ENCODE measurements at regions of chr3 and their contacts with region 1.

Region 1: DNA sequence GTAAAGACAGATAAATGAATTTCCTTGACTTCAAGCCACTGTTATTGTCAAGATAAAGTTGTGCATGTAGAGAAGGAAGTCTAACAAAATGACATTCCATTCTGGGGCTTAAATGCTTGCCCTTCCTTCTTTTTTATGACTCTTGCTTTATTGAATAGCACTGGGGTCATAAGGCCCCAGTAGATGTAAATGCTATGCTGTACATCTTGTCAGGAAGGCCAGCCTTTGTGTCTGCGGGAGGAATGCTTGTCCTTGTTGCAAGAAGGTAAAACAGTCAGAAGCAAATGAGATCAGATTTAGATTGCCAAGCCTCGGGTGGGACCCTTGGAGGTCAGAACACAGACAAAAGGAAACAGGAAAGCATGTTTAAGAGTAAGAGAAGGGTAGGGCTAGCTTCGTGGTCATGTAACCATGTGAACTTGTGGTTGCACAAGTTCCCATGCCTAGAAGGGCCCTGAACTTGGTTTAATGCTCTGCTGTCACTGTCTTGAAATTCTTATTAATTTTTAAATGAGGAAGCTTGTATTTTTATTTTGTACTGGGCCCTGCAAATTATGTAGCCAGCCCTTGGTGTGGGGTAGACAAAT is 81.5 kb downstream of the PPM1L start:
- DNase-seq: peak in 1 of 2 donors; percentile 15
- ATAC-seq: peak; percentile 76 to 86 (median 80)
- H3K4me3 ChIP-seq: no peak overlapping the region
- H3K4me3 Mint-ChIP-seq: peak overlapping the region; percentile 78
- H3K27ac ChIP-seq: peak overlapping the region; percentile 70
- H3K27ac Mint-ChIP-seq: peak overlapping the region; percentile 87 to 91
- H3K4me1 ChIP-seq: peaks cover 14% of the 10 kb centered on the region
- H3K4me1 Mint-ChIP-seq: peaks cover 75 to 93% of the 10 kb centered on the region in 2 donors
- H3K27me3 ChIP-seq: no peaks in the 10 kb centered on the region
- H3K27me3 Mint-ChIP-seq: no peaks in the 10 kb centered on the region
- CTCF ChIP-seq: no peak

Region 2: DNA sequence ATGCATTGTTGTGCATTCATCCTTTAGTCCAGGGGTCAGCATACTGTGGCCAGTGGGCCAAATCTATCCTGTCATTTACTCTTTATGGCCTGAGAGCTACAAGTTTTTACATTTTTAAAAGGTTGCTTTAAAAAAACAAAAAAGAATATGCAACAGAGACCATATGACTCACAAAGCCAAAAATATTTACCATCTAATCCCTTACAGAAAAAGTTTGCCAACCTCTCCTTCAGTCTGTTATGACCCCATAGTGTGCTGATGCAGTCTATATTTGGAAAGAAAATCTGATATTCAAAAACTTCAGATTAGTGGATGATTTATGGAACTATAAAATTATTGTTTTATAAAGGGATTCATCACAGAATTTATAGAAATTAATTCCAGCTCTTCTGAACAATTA is 1086.3 kb before region 1 on chr3:
- intact Hi-C with region 1: no loop called
- DNase-seq: no peak
- ATAC-seq: no peak
- H3K4me3 ChIP-seq: no peak overlapping the region
- H3K4me3 Mint-ChIP-seq: no peak overlapping the region
- H3K27ac ChIP-seq: no peak overlapping the region
- H3K27ac Mint-ChIP-seq: no peak overlapping the region
- H3K4me1 ChIP-seq: no peaks in the 10 kb centered on the region
- H3K4me1 Mint-ChIP-seq: no peaks in the 10 kb centered on the region
- H3K27me3 ChIP-seq: no peaks in the 10 kb centered on the region
- H3K27me3 Mint-ChIP-seq: peaks cover 0 to 4% of the 10 kb centered on the region in 2 donors
- CTCF ChIP-seq: no peak

Region 3: GRCh38 chr3:160754855-160755747 is 82.4 kb before region 1 on chr3:
- intact Hi-C with region 1: loop called (anchors 5 kb)
- DNase-seq: peak; percentile 81 to 94
- ATAC-seq: peak; percentile 83 to 93 (median 84)
- H3K4me3 ChIP-seq: peak overlapping the region; percentile 93
- H3K4me3 Mint-ChIP-seq: peak overlapping the region; percentile 97
- H3K27ac ChIP-seq: peak overlapping the region; percentile 78
- H3K27ac Mint-ChIP-seq: peak overlapping the region; percentile 91 to 92
- H3K4me1 ChIP-seq: peaks cover 28% of the 10 kb centered on the region
- H3K4me1 Mint-ChIP-seq: peaks cover 52 to 54% of the 10 kb centered on the region in 2 donors
- H3K27me3 ChIP-seq: no peaks in the 10 kb centered on the region
- H3K27me3 Mint-ChIP-seq: no peaks in the 10 kb centered on the region
- CTCF ChIP-seq: no peak

Region 4: GRCh38 chr3:160784848-160785247 is 52.6 kb before region 1 on chr3:
- intact Hi-C with region 1: loop called (anchors 10 kb)
- DNase-seq: no peak
- ATAC-seq: peak; percentile 71 to 86 (median 77)
- H3K4me3 ChIP-seq: no peak overlapping the region
- H3K4me3 Mint-ChIP-seq: peak overlapping the region; percentile 3
- H3K27ac ChIP-seq: no peak overlapping the region
- H3K27ac Mint-ChIP-seq: no peak overlapping the region
- H3K4me1 ChIP-seq: peaks cover 5% of the 10 kb centered on the region
- H3K4me1 Mint-ChIP-seq: peaks cover 59 to 62% of the 10 kb centered on the region in 2 donors
- H3K27me3 ChIP-seq: no peaks in the 10 kb centered on the region
- H3K27me3 Mint-ChIP-seq: no peaks in the 10 kb centered on the region
- CTCF ChIP-seq: no peak

Region 5: GRCh38 chr3:160885791-160886286 is 48.4 kb after region 1 on chr3:
- intact Hi-C with region 1: no loop called
- DNase-seq: no peak
- ATAC-seq: no peak
- H3K4me3 ChIP-seq: no peak overlapping the region
- H3K4me3 Mint-ChIP-seq: no peak overlapping the region
- H3K27ac ChIP-seq: no peak overlapping the region
- H3K27ac Mint-ChIP-seq: no peak overlapping the region
- H3K4me1 ChIP-seq: no peaks in the 10 kb centered on the region
- H3K4me1 Mint-ChIP-seq: peaks cover 13 to 16% of the 10 kb centered on the region in 2 donors
- H3K27me3 ChIP-seq: no peaks in the 10 kb centered on the region
- H3K27me3 Mint-ChIP-seq: no peaks in the 10 kb centered on the region
- CTCF ChIP-seq: no peak

Measured in natural killer cell (primary cell).